ENCODE measurements at regions of chr1 and their contacts with region 1.

Region 1: DNA sequence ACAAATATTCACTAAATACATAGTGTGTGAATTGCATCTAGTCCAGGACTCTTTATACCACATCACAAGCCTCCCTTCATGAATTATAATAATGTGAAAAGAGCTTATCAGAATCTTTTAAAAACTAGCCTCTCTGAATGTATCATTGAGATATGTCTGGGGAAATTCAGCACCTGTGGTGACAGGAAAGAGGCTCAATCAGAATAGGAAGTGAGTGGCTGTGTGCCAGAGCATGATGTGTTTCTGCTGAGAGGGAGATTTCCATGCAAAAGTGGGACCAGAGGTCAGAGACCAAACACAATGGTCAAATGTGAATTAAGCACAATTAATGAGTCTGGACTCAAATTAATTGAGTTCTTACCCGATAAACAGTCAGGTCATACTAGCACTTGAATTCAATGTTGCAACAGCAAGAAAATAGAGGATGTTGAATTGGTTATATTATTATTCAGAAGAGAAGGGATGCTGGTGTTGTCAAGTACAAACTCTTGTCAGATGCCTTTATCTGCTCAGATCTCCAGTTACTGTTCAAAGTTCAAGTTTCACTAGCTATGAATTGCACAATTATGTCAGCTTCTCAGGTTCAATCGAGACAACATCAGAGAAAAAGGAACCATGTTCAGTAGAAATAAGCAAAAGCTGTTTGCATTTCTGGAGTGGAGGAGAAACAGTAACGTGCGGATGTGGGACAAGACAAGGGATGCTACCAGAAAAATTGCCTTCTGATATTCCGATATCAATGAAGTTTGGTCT is 226.2 kb downstream of the ZNF326 start:
- DNase-seq: no peak
- H3K4me3 Mint-ChIP-seq: no peak overlapping the region
- H3K27ac Mint-ChIP-seq: no peak overlapping the region
- H3K4me1 Mint-ChIP-seq: peaks cover 9% of the 10 kb centered on the region
- H3K27me3 Mint-ChIP-seq: peaks cover 9% of the 10 kb centered on the region
- CTCF ChIP-seq: no peak

Region 2: GRCh38 chr1:90012305-90012704 is 208.8 kb before region 1 on chr1:
- CTCF ChIA-PET with region 1: no interaction called
- intact Hi-C with region 1: no loop called
- DNase-seq: no peak
- H3K4me3 Mint-ChIP-seq: no peak overlapping the region
- H3K27ac Mint-ChIP-seq: no peak overlapping the region
- H3K4me1 Mint-ChIP-seq: no peaks in the 10 kb centered on the region
- H3K27me3 Mint-ChIP-seq: no peaks in the 10 kb centered on the region
- CTCF ChIP-seq: no peak

Region 3: DNA sequence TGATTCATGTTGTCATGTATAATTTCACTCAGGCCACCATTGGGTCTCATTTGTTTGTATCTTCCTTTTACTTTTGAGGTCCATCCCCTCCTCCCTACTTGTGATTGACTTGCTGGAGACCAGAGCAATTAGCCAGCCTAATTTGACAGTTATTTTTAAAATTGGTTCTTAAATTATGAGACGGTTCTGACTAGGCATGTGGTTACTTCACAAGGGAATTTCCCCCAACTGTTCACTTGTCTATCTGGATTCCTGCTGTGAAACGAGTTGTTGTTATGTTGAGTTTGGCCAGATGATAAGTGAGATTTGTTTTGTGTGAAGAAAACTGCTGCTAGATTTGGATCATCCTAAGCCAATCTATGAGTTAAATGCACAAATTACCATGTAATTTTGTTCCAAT is 136.9 kb after region 1 on chr1:
- CTCF ChIA-PET with region 1: no interaction called
- intact Hi-C with region 1: loop called (anchors 5 kb)
- DNase-seq: no peak
- H3K4me3 Mint-ChIP-seq: no peak overlapping the region
- H3K27ac Mint-ChIP-seq: no peak overlapping the region
- H3K4me1 Mint-ChIP-seq: no peaks in the 10 kb centered on the region
- H3K27me3 Mint-ChIP-seq: peaks cover 47% of the 10 kb centered on the region
- CTCF ChIP-seq: no peak